Sigmoid colon (tissue), 7 donors: ENCODE measurements at regions of chr19 and their contacts with region 1.

Region 1: GRCh38 chr19:49817964-49818648 is at the start of gene MED25:
- DNase-seq: peak; percentile 91
- H3K4me3 ChIP-seq: peak within 1 kb of the TSS; percentile 77 to 94 (median 82)
- H3K27ac ChIP-seq: peak within 1 kb of the TSS; percentile 96 to 98 (median 96)
- H3K4me1 ChIP-seq: peaks cover 0 to 35% (median 30%) of the 10 kb centered on the region in 4 donors
- H3K27me3 ChIP-seq: no peaks in the 10 kb centered on the region
- CTCF ChIP-seq: peak; percentile 34 to 73 (median 51)
- EP300 ChIP-seq: no peak
- POLR2A ChIP-seq: peak; percentile 68 to 76
- total RNA-seq, gene MED25: 17.8 to 45.4 (median 22.4) TPM

Region 2: DNA sequence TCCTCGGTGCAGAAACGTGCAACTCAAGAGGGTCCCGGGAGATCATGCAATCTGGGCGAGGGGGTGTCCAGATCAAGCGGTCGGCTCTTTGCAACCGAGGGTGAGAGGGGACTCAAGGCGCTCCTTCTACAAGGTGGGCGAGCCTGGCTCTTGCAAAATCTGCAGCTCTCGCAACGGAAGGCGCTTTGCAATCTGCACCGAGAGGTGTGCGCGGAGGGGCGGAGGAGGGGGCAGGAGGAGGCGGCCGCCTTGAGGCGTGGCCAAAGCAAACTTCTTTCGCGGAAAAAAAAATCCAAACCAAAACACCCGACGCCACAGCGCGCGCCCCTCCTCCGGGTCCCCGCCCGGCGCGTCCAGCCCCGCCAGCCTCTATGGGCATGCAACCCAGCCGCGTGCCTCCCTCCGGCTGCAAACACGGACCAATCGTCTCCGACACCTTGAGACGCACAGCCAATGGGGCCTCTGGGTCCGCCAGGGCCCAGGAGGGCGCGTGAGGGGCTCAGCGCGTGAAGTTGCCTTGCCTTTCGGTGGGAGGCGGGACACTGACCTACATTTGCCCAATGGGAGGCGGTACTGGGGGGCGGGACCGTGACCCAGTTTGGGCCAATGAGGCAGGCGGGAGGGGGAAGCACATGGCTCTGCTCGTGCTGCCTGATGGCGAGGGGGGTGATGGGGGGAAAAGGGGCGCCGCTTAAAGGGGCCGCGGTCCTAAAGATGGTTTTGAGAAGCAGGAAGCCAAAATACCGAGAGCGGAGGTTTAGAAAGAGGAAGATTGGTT is 1180.7 kb before region 1 on chr19 and contains the start of gene DBP:
- intact Hi-C with region 1: loop called (anchors 5 kb)
- DNase-seq: peak; percentile 100
- H3K4me3 ChIP-seq: peak within 1 kb of the TSS; percentile 54 to 89 (median 64)
- H3K27ac ChIP-seq: peak within 1 kb of the TSS; percentile 91 to 99 (median 96)
- H3K4me1 ChIP-seq: peaks cover 0 to 52% (median 38%) of the 10 kb centered on the region in 4 donors
- H3K27me3 ChIP-seq: no peaks in the 10 kb centered on the region
- CTCF ChIP-seq: no peak
- EP300 ChIP-seq: peak in 1 of 4 donors; percentile 74
- POLR2A ChIP-seq: peak; percentile 70 to 74
- total RNA-seq, gene DBP: 10.5 to 14.1 (median 11.9) TPM

Region 3: GRCh38 chr19:49766007-49766937 is 51.8 kb before region 1 on chr19:
- intact Hi-C with region 1: loop called (anchors 2 kb)
- DNase-seq: peak; percentile 100
- H3K4me3 ChIP-seq: peak overlapping the region; percentile 14 to 96 (median 92)
- H3K27ac ChIP-seq: peak overlapping the region; percentile 91 to 96 (median 92)
- H3K4me1 ChIP-seq: peaks cover 0 to 36% (median 27%) of the 10 kb centered on the region in 4 donors
- H3K27me3 ChIP-seq: no peaks in the 10 kb centered on the region
- CTCF ChIP-seq: no peak
- EP300 ChIP-seq: no peak
- POLR2A ChIP-seq: peak; percentile 36 to 39

Region 4: GRCh38 chr19:49850473-49851342 is 32.6 kb after region 1 on chr19 and contains the start of gene PTOV1:
- intact Hi-C with region 1: loop called (anchors 2 kb)
- DNase-seq: peak; percentile 97
- H3K4me3 ChIP-seq: peak within 1 kb of the TSS; percentile 76 to 100 (median 95)
- H3K27ac ChIP-seq: peak within 1 kb of the TSS; percentile 99 to 100 (median 100)
- H3K4me1 ChIP-seq: peaks cover 0 to 44% (median 33%) of the 10 kb centered on the region in 4 donors
- H3K27me3 ChIP-seq: no peaks in the 10 kb centered on the region
- CTCF ChIP-seq: no peak
- EP300 ChIP-seq: no peak
- POLR2A ChIP-seq: peak; percentile 53 to 76
- total RNA-seq, gene PTOV1: 52.2 to 105 (median 68.1) TPM

Region 5: GRCh38 chr19:49862376-49863253 is 44.5 kb after region 1 on chr19:
- intact Hi-C with region 1: no loop called
- DNase-seq: peak; percentile 69
- H3K4me3 ChIP-seq: no peak overlapping the region
- H3K27ac ChIP-seq: no peak overlapping the region
- H3K4me1 ChIP-seq: peaks cover 0 to 40% (median 32%) of the 10 kb centered on the region in 4 donors
- H3K27me3 ChIP-seq: no peaks in the 10 kb centered on the region
- CTCF ChIP-seq: no peak
- EP300 ChIP-seq: no peak
- POLR2A ChIP-seq: no peak